GM12878 (cell line): ENCODE measurements at regions of chrX and their contacts with region 1.

Region 1: GRCh38 chrX:15882704-15883539 is 28.3 kb upstream of the AP1S2 start:
- DNase-seq: peak; percentile 64
- ATAC-seq: peak; percentile 96
- H3K4me3 ChIP-seq: no peak overlapping the region
- H3K27ac ChIP-seq: no peak overlapping the region; the same call in 1 of the 2 replicates
- H3K4me1 ChIP-seq: peaks cover 10% of the 10 kb centered on the region
- H3K27me3 ChIP-seq: no peaks in the 10 kb centered on the region
- CTCF ChIP-seq: no peak
- EP300 ChIP-seq: peak; percentile 42 to 48; a peak in 2 of 4 replicates
- POLR2A ChIP-seq: no peak
- RAD21 ChIP-seq: no peak

Region 2: GRCh38 chrX:15903186-15903681 is 20.3 kb after region 1 on chrX:
- CTCF ChIA-PET with region 1: no interaction called
- POLR2A ChIA-PET with region 1: interaction called, 3 read pairs
- RAD21 ChIA-PET with region 1: interaction called, 3 read pairs
- SMC1A ChIA-PET with region 1: interaction called, 4 read pairs
- in situ Hi-C with region 1: no loop called
- intact Hi-C with region 1: loop called (anchors 1 kb)
- DNase-seq: peak; percentile 84
- ATAC-seq: peak; percentile 98
- H3K4me3 ChIP-seq: no peak overlapping the region
- H3K27ac ChIP-seq: peak overlapping the region; percentile 69
- H3K4me1 ChIP-seq: peaks cover 16% of the 10 kb centered on the region
- H3K27me3 ChIP-seq: no peaks in the 10 kb centered on the region
- CTCF ChIP-seq: no peak
- EP300 ChIP-seq: peak in 1 of 2 experiments; percentile 46; a peak in 1 of 4 replicates
- POLR2A ChIP-seq: no peak
- RAD21 ChIP-seq: no peak; the same call in 1 of the 2 replicates